Activated CD4-positive, alpha-beta memory T cell treated with anti-CD3 and anti-CD28 coated beads, Interleukin-2, amount 10 ng/mL, durations not matched to agents 7 days and 5 days (primary cell): ENCODE measurements at regions of chr7 and their contacts with region 1.

Region 1: DNA sequence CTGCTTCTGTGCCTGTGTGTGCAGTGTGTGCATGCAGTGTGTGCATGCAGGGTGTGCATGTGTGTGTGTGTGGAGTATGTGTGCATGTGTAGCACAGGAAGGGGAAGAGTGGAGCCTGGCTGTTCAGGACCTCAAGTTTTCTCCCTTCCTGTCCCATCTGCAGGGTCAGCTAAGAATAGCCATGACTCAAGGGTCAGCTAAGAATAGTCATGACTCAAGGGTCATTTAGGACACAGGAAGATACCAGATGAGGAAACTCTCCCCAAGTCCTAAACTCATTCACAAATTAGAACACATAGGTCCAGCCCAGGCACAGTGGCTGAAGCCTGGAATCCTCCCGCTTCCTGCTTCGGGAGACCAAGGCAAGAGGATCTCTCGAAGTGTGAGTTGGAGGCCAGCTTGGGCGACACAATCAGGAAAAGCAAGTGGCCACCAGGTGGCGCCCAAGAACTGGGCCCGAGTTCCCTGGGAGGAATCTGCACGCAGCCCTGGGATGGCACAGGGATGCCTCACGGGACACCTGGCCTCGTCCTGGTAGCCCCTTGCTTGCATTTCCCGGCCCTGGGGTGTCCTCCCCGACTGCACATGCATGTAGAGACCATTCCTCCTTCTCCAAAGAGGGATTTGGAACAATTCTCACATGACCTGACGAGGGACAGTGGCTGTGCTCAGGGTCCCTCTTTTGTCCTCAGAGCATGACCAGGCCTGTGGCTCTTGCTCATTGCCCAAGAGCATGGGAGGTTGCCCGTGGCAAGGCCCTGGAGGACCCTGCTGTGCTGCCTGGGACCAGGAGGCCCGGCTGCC is 21.4 kb upstream of the VOPP1 start:
- DNase-seq: peak; percentile 72
- H3K4me3 Mint-ChIP-seq: no peak overlapping the region
- H3K27ac Mint-ChIP-seq: no peak overlapping the region
- H3K4me1 Mint-ChIP-seq: no peaks in the 10 kb centered on the region
- H3K27me3 Mint-ChIP-seq: peaks cover 4% of the 10 kb centered on the region

Region 2: DNA sequence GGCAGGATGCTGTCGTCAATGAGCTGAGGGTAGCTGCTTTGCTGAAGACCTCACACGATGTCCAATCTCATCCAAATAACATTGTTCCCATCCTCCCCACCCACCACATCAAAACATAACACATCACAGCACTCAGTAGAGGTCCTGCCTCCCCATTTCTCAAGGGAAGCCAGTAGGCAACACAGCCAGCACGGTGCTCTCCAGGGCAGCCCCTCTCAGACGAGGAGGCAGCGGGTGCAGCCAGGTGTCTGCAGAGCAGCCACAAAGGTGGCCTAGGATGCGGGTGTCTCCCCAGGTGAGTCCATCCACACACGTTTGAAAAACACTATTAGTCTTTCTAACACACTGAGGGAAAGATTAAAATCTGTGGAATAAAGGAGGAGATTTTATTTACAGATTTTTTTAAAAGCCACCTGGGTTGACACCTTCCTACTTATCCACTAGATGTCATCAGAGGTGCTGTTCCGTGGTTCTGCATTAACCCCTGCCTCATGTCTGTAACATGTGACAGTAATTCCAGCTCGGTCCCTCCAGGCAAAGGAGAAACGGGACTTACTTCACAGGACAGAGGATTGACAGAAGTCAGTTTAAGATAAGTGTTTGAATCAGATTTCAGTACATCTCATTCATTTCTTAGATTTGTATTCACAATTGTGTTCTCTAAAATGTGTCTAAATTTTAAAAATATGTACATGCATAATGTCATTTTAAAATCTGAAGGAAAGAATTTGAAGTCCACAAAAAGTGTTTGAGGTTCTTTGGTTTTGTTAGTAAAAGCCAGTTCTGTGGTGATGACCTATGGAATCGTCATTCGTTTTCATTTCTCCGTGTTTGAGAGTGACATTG is 160.6 kb before region 1 on chr7:
- CTCF ChIA-PET with region 1: interaction called, 11 read pairs
- POLR2A ChIA-PET with region 1: no interaction called
- DNase-seq: no peak
- H3K4me3 Mint-ChIP-seq: no peak overlapping the region
- H3K27ac Mint-ChIP-seq: no peak overlapping the region
- H3K4me1 Mint-ChIP-seq: no peaks in the 10 kb centered on the region
- H3K27me3 Mint-ChIP-seq: no peaks in the 10 kb centered on the region